AG04449 (cell line): ENCODE measurements at regions of chr20 and their contacts with region 1.

Region 1: GRCh38 chr20:19692685-19693119 is 65.4 kb upstream of the RIN2 start:
- DNase-seq: no peak
- H3K4me3 ChIP-seq: no peak overlapping the region
- CTCF ChIP-seq: peak; percentile 80

Region 2: DNA sequence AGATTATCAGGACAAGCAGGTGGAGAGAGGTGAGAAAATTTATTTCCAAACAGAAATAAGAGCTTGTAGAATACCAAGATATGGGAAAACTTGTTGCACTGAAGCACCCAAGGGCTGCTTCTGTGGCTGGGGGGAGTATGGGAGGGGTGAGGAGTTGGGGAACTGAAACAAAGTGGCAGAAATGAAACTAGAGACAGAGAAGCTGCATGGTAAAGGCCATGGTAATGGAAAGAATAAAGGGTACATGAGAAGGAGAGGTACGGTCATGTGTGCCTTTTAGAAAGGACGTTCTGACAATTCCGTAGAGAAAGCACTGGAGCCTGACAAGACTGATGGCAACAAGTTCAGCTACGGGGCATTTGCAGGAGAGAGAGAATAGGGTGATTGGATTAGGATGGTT is 13.8 kb after region 1 on chr20:
- CTCF ChIA-PET with region 1: interaction called, 16 read pairs
- POLR2A ChIA-PET with region 1: no interaction called
- DNase-seq: no peak
- H3K4me3 ChIP-seq: no peak overlapping the region
- CTCF ChIP-seq: no peak

Region 3: DNA sequence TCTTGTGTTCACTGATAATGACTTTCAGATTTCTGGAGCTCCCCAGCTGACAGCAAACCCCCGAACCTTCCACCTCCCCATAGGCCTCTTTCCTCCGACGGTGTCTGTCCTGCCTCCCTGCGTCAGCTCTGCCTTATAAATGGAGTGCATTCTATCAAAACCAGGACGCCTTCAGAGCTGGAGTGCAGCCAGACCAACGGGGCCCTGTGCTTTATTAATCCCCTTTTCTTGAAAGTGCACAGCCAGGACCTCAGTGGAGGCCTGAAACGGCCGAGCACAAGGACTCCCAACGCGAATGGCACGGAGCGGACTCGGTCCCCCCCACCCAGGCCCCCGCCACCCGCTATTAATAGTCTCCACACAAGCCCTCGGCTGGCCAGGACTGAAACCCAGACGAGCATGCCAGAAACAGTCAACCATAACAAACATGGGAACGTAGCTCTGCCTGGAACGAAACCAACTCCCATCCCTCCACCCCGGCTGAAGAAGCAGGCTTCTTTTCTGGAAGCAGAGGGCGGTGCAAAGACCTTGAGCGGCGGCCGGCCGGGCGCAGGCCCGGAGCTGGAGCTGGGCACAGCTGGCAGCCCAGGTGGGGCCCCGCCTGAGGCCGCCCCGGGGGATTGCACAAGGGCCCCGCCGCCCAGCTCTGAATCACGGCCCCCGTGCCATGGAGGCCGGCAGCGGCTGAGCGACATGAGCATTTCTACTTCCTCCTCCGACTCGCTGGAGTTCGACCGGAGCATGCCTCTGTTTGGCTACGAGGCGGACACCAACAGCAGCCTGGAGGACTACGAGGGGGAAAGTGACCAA is 282.1 kb after region 1 on chr20:
- CTCF ChIA-PET with region 1: interaction called, 11 read pairs
- POLR2A ChIA-PET with region 1: no interaction called
- DNase-seq: peak; percentile 96
- H3K4me3 ChIP-seq: peak overlapping the region; percentile 90
- CTCF ChIP-seq: no peak

Region 4: GRCh38 chr20:20017001-20017843 is 324.5 kb after region 1 on chr20 and contains the start of gene NAA20:
- CTCF ChIA-PET with region 1: interaction called, 22 read pairs
- POLR2A ChIA-PET with region 1: no interaction called
- DNase-seq: no peak
- H3K4me3 ChIP-seq: peak within 1 kb of the TSS; percentile 88
- CTCF ChIP-seq: peak; percentile 89

Region 5: DNA sequence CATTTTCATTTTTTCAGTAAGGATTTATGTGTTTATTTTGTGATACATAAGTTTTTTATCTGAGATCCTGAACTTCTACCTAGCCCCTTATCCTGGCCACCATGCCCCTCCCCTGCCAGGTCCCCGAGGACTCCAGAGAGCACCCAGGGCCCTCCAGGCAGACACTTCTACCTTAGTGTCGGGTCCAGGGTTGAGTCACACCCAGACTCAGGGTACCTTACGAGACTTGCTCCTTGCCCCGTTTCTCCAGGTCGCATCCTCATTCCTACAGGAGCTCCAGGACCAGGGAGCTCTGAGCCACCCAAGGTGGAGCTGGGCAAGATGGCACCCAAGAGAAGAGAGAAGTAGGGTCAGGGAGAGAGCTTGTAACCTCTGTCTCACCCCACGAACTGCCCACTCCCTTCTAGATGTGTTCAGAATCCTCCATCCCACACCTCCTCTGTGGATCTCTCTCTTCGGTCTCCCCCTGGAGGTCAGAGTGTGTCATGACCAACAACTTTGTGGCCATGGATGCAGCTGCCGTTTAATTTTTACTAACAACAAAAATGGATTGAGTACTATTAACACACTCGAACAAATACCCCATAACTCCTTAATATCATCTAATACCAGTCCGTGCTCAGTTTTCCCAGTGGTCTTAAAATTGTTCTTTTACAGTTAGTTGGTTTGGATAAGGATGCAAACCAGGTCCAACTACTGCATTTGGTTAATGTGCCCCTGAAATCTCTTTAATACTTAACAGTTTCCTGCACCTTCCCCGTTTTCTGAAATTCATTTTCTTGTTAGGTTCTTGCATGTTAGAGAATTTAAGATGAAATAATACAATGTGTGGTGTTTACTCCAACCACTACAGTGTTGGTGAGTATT is 544.6 kb after region 1 on chr20:
- CTCF ChIA-PET with region 1: interaction called, 16 read pairs
- POLR2A ChIA-PET with region 1: no interaction called
- DNase-seq: no peak
- H3K4me3 ChIP-seq: no peak overlapping the region
- CTCF ChIP-seq: peak; percentile 76